IMR-90 (cell line): ENCODE measurements at regions of chr3 and their contacts with region 1.

Region 1: GRCh38 chr3:148075763-148076716 is 621.7 kb upstream of the AGTR1 start:
- DNase-seq: peak; percentile 59
- ATAC-seq: peak; percentile 87
- H3K4me3 ChIP-seq: no peak overlapping the region
- H3K27ac ChIP-seq: no peak overlapping the region
- H3K4me1 ChIP-seq: no peaks in the 10 kb centered on the region
- H3K27me3 ChIP-seq: no peaks in the 10 kb centered on the region
- CTCF ChIP-seq: peak; percentile 69
- POLR2A ChIP-seq: no peak
- RAD21 ChIP-seq: peak; percentile 76

Region 2: GRCh38 chr3:147119989-147120388 is 956.1 kb before region 1 on chr3:
- CTCF ChIA-PET with region 1: no interaction called
- POLR2A ChIA-PET with region 1: no interaction called
- dilution Hi-C with region 1: no loop called
- in situ Hi-C with region 1: no loop called
- intact Hi-C with region 1: loop called (anchors 5 kb)
- DNase-seq: peak; percentile 45
- ATAC-seq: peak; percentile 66
- H3K4me3 ChIP-seq: no peak overlapping the region
- H3K27ac ChIP-seq: no peak overlapping the region
- H3K4me1 ChIP-seq: no peaks in the 10 kb centered on the region
- H3K27me3 ChIP-seq: no peaks in the 10 kb centered on the region
- CTCF ChIP-seq: peak; percentile 61
- POLR2A ChIP-seq: no peak
- RAD21 ChIP-seq: peak; percentile 61

Region 3: DNA sequence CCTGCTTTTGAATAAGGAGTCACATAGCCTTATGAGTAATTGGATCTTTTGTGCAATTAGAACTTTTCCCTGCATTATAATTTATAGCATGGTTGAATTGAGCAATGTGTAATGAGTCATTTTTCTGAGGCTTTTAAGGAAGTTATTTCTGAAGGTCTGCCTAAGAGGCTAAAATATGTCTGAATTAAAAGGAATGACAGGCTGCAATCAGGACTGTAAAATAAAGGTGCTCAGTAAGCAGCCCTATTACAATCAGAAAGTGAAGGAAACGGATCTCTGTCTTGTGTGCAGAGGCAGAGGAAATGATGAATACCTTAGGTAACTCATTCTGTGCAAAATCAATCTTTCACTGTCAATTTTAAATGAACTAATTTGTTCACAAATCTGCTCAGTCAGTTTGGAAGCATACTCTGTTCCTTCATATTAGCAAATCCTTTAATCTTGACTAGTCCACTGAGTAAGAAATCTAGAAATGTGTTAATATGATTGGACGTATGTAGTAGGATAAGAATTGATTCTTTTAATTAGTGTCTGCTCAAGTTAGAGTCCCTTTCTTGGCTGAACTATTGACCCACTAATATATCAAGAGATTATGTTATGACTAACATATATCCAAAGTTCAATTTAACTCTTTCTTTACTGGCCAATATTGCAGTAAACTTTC is 376.7 kb before region 1 on chr3:
- CTCF ChIA-PET with region 1: no interaction called
- POLR2A ChIA-PET with region 1: no interaction called
- dilution Hi-C with region 1: no loop called
- in situ Hi-C with region 1: no loop called
- intact Hi-C with region 1: loop called (anchors 10 kb)
- DNase-seq: peak; percentile 21
- ATAC-seq: peak; percentile 46; the same call in 1 of the 2 replicates
- H3K4me3 ChIP-seq: no peak overlapping the region
- H3K27ac ChIP-seq: no peak overlapping the region
- H3K4me1 ChIP-seq: no peaks in the 10 kb centered on the region
- H3K27me3 ChIP-seq: no peaks in the 10 kb centered on the region
- CTCF ChIP-seq: no peak
- POLR2A ChIP-seq: no peak
- RAD21 ChIP-seq: no peak

Region 4: GRCh38 chr3:147945968-147946519 is 130.0 kb before region 1 on chr3:
- CTCF ChIA-PET with region 1: no interaction called
- POLR2A ChIA-PET with region 1: no interaction called
- dilution Hi-C with region 1: no loop called
- in situ Hi-C with region 1: no loop called
- intact Hi-C with region 1: loop called (anchors 2 kb)
- DNase-seq: peak; percentile 95
- ATAC-seq: peak; percentile 91
- H3K4me3 ChIP-seq: peak overlapping the region; percentile 50; the same call in 1 of the 2 replicates
- H3K27ac ChIP-seq: peak overlapping the region; percentile 84; the same call in 1 of the 2 replicates
- H3K4me1 ChIP-seq: peaks cover 11% of the 10 kb centered on the region
- H3K27me3 ChIP-seq: no peaks in the 10 kb centered on the region
- CTCF ChIP-seq: peak; percentile 86
- POLR2A ChIP-seq: no peak
- RAD21 ChIP-seq: peak; percentile 54